Head of caudate nucleus (tissue), 42 donors: ENCODE measurements at regions of chr5 and their contacts with region 1.

Region 1: GRCh38 chr5:79464695-79465332 is 49.1 kb downstream of the HOMER1 start:
- DNase-seq: no peak

Region 2: DNA sequence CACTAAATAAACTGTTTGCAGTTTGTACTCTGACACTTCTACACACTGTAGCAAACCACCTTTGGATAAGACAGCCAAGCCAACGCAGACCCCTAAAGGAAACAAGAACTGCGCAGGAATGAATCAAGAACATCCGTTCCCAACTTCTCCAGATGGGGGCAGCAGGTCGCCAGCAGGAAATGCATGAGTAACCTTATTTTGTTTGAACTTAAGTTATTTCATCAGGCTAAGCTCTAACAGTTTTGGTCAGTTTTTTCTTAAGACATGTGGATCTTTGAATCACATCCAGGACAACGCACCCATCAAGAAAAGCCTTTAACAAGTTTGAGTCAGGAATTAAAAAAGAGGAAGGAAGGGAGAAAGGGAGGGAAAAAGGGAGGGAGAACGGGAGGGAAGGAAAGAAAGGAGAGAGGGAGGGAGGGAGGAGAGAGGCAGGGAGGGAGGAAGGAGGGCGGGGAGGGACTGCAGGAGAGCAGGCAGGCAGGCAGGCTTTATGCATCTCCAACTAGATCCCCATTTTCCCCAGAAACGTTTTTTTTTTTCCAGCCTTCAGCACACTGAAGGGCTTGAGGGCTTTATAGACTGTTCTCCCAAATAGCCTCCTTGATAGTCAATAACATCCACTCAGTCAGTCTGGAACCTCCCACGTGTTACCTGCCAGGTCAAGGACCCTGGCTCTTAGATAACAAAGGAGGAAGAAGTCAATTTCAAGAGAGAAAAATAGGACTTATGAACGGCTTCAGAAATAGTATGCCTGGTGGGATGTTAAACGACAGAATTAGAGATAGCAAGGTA is 331.0 kb before region 1 on chr5:
- intact Hi-C with region 1: loop called (anchors 5 kb)
- DNase-seq: peak; percentile 38 to 86 (median 68)

Region 3: DNA sequence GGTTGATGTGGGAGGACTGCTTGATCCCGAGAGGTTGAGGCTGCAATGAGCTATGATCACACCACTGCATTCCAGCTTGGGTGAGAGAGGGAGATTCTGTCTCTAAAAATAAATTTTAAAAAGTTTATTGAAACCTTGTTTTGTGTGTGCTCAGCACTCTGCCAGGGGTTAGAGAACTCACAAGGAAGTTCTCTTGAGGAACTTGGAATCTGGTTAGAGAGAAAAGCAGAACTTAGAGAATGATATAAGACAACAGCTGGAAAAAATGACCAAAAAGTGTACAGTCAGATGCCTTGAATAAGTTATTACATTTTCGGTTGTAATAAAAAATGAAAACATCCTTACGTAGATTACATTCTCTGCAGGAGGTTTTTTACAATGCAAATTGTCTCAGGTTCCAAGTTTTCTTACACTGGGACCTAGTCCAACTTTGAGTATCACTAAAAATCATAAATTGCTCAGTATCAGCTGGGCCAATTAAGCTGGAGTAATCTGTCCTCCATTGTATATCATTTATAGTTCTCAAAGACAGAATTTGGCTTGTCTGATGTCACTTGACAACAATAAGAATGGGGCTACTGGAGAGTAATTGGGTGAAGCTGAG is 125.7 kb after region 1 on chr5:
- intact Hi-C with region 1: no loop called
- DNase-seq: no peak